ENCODE measurements at regions of chr16 and their contacts with region 1.

Region 1: GRCh38 chr16:67226804-67227557 is at the start of gene TMEM208:
- DNase-seq: peak; percentile 99
- H3K4me3 Mint-ChIP-seq: peak within 1 kb of the TSS; percentile 99
- H3K27ac Mint-ChIP-seq: peak within 1 kb of the TSS; percentile 99
- H3K4me1 Mint-ChIP-seq: peaks cover 21% of the 10 kb centered on the region
- H3K27me3 Mint-ChIP-seq: no peaks in the 10 kb centered on the region
- CTCF ChIP-seq: no peak
- total RNA-seq, gene TMEM208: 44.4 and 55.5 TPM in 2 replicates

Region 2: DNA sequence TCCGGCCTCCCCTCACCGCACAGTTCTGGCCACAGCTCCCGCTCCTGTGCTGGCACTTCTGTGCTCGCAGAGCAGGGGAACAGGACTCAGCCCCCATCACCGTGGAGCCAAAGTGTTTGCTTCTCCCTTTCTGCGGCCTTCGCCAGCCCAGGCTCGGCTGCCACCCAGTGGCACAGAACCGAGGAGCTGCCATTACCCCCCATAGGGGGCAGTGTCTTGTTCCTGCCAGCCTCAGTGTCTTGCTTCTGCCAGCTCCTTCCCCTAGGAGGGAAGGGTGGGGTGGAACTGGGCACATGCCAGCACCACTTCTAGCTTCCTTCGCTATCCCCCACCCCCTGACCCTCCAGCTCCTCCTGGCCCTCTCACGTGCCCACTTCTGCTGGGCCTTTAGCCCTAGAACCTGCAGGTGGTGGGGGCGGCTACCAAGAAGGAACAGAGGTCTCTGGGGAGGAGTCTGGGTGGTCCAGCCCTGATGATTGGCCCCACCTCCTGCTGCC is 28.7 kb before region 1 on chr16:
- CTCF ChIA-PET with region 1: interaction called, 13 read pairs
- POLR2A ChIA-PET with region 1: interaction called, 6 read pairs
- intact Hi-C with region 1: loop called (anchors 2 kb)
- DNase-seq: peak; percentile 84
- H3K4me3 Mint-ChIP-seq: peak overlapping the region; percentile 89
- H3K27ac Mint-ChIP-seq: peak overlapping the region; percentile 55
- H3K4me1 Mint-ChIP-seq: peaks cover 34% of the 10 kb centered on the region
- H3K27me3 Mint-ChIP-seq: no peaks in the 10 kb centered on the region
- CTCF ChIP-seq: peak; percentile 74

Region 3: GRCh38 chr16:67207857-67208519 is 19.0 kb before region 1 on chr16:
- CTCF ChIA-PET with region 1: interaction called, 5 read pairs
- POLR2A ChIA-PET with region 1: interaction called, 87 read pairs
- intact Hi-C with region 1: no loop called
- DNase-seq: peak; percentile 81
- H3K4me3 Mint-ChIP-seq: peak overlapping the region; percentile 47
- H3K27ac Mint-ChIP-seq: peak overlapping the region; percentile 66
- H3K4me1 Mint-ChIP-seq: peaks cover 32% of the 10 kb centered on the region
- H3K27me3 Mint-ChIP-seq: no peaks in the 10 kb centered on the region
- CTCF ChIP-seq: no peak